HEK293 (cell line): ENCODE measurements at regions of chr7 and their contacts with region 1.

Region 1: DNA sequence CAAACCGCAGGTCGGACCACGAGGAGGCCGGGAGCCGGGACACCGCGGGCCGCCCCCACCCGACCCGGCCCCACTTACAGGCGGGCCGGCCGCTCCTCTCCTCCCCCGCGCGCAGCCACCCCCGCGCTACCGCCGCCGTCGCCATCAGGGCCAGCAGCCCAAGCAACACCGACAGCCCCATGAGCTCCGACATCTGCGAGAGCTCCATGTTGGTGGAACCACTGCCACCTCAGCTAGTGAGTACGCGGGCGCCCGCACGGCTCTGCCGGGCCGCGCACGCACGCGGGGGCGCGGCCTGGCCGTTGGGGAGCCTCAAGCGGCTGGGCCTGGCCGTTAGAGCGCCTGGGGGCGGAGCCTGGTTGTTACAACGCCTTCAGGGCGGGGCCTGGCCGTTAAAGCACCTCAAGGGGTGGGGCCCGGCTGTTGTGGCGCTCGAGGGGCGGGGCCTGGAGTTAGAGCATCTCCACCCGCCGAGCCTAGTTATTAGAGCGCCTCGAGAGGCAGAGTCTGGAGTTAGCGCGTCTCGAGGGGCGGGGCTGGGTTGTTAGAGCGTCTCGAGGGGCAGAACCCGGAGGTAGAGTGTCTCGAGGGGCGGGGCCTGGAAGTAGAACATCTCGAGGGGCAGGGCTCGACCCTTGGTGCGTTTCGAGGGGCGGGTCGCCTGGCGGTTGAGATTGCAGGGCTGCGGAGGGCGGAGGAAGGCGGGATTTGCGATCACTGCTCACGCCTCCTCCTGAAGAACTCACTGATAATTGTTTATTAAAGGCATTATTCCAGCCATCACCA is at the start of gene TBL2:
- H3K4me3 ChIP-seq: peak within 1 kb of the TSS; percentile 84
- H3K27ac ChIP-seq: peak within 1 kb of the TSS; percentile 77
- H3K4me1 ChIP-seq: no peaks in the 10 kb centered on the region
- CTCF ChIP-seq: no peak

Region 2: DNA sequence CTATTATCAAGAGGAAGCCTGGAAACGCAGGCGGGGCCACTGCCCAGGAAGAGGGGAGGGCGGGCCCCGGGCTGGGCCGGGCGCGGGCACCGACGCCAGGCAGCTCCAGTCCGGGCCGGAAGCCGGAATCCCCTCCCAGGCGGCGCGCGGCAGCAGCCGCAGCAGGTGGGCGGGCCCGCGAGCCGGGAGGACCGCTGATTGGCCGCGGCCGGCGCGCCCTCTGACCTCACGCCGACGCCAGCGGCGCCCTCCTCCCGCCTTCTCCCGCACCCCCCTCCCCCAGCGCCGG is 21.5 kb before region 1 on chr7:
- CTCF ChIA-PET with region 1: interaction called, 4 read pairs
- POLR2A ChIA-PET with region 1: interaction called, 10 read pairs
- H3K4me3 ChIP-seq: peak overlapping the region; percentile 94
- H3K27ac ChIP-seq: peak overlapping the region; percentile 96
- H3K4me1 ChIP-seq: peaks cover 3% of the 10 kb centered on the region; the same call in 1 of the 2 replicates
- CTCF ChIP-seq: no peak

Region 3: GRCh38 chr7:73565675-73566340 is 12.7 kb before region 1 on chr7:
- CTCF ChIA-PET with region 1: interaction called, 4 read pairs
- POLR2A ChIA-PET with region 1: interaction called, 16 read pairs
- H3K4me3 ChIP-seq: no peak overlapping the region
- H3K27ac ChIP-seq: no peak overlapping the region
- H3K4me1 ChIP-seq: no peaks in the 10 kb centered on the region
- CTCF ChIP-seq: no peak